Activated CD4-positive, alpha-beta T cell treated with anti-CD3 and anti-CD28 coated beads, Interleukin-2, amount 10 ng/mL, durations not matched to agents 7 days and 5 days (primary cell): ENCODE measurements at regions of chr9 and their contacts with region 1.

Region 1: DNA sequence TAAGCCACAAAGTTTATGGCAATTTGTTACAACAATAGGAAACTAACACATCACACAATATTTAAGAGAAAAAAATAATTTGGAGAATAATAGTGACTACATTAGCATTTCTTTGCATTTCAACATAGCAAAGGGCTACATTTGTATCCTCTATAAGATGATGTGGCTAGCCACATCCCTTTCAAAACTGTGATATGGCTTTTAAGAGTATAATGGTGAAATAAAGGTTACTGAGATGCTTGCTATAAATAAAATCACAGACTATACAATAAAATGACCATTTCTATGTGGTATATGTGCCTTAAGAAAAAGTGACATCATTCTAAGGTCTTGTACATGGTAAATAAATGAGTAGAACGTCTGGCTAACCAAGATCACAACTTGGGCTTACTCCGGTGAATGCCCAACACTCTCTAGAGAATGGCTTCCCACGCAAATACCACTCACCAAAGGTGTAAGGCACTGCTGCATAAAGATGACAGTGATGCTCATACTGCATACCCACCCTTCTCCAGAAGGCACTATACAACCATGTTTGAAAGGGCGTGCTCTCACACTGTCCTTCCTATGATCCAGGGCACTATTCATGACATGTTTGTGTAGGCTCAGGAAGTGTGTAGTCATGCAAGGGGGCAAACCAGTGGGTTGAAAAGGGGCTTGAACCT is 286.5 kb downstream of the MLLT3 start:
- DNase-seq: peak; percentile 6
- H3K4me3 Mint-ChIP-seq: no peak overlapping the region
- H3K27ac Mint-ChIP-seq: no peak overlapping the region
- H3K4me1 Mint-ChIP-seq: peaks cover 40% of the 10 kb centered on the region
- H3K27me3 Mint-ChIP-seq: no peaks in the 10 kb centered on the region

Region 2: DNA sequence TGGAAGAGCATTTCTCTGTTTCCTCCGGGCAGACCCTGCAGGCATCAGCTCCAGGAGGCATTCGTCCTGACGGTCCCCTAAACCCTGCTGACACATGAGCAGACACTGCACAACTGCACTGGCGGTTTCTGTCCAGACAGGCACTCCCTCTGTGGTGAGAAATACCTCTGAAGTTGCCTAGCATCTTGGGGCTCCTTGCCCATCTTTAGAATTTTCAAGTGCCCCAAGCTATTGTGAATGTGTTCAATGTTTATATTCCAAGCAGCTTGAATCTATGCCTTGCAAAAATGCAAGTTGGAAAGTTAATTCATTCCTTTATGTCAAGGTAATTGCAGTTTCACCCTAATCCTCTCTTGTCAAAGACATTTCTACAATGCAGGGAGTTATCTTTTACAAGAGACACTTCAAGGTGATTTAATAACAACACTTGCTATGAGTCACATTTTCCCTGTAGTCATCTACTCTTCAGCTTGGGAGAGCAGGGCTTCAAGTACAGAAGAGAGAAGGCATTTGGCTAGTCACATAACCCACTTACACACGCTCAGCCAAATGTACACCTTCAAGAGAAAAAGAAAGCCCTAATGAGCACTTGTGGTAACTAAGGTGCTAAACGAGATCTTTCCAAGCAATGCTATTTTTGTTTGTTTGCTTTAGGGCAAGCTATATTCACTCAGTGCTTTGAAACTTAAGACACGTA is 16.0 kb before region 1 on chr9:
- CTCF ChIA-PET with region 1: interaction called, 18 read pairs
- POLR2A ChIA-PET with region 1: no interaction called
- DNase-seq: no peak
- H3K4me3 Mint-ChIP-seq: no peak overlapping the region
- H3K27ac Mint-ChIP-seq: peak overlapping the region; percentile 69
- H3K4me1 Mint-ChIP-seq: peaks cover 92% of the 10 kb centered on the region
- H3K27me3 Mint-ChIP-seq: no peaks in the 10 kb centered on the region

Region 3: GRCh38 chr9:20419533-20419932 is 83.7 kb after region 1 on chr9:
- CTCF ChIA-PET with region 1: no interaction called
- POLR2A ChIA-PET with region 1: no interaction called
- DNase-seq: no peak
- H3K4me3 Mint-ChIP-seq: no peak overlapping the region
- H3K27ac Mint-ChIP-seq: no peak overlapping the region
- H3K4me1 Mint-ChIP-seq: peaks cover 34% of the 10 kb centered on the region
- H3K27me3 Mint-ChIP-seq: no peaks in the 10 kb centered on the region